AG04449 (cell line): ENCODE measurements at regions of chr5 and their contacts with region 1.

Region 1: GRCh38 chr5:148443998-148444397 is 60.2 kb downstream of the FBXO38 start:
- DNase-seq: peak; percentile 14
- H3K4me3 ChIP-seq: no peak overlapping the region
- CTCF ChIP-seq: peak; percentile 63

Region 2: GRCh38 chr5:148393390-148393741 is 50.6 kb before region 1 on chr5:
- CTCF ChIA-PET with region 1: interaction called, 20 read pairs
- POLR2A ChIA-PET with region 1: no interaction called
- DNase-seq: no peak
- H3K4me3 ChIP-seq: no peak overlapping the region
- CTCF ChIP-seq: no peak

Region 3: DNA sequence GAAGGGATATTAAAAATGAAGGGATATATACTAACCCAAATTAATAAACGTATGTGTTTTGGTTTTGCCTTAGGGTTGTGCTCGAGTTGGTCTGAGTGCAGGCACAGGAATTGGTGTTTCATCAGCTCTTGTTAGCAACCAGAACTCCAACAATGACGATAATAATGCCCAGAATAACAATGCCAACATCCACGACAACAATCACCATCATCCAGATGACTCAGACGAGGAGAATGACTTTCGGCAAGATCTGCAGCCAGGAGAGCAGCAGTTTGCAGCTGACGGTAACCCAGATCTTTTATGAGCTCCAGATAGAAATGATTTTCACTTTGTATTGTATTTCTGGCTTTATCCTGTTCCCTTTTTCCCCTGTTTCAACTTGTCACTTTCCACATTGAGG is 27.1 kb before region 1 on chr5:
- CTCF ChIA-PET with region 1: interaction called, 19 read pairs
- POLR2A ChIA-PET with region 1: no interaction called
- DNase-seq: no peak
- H3K4me3 ChIP-seq: no peak overlapping the region
- CTCF ChIP-seq: no peak

Region 4: DNA sequence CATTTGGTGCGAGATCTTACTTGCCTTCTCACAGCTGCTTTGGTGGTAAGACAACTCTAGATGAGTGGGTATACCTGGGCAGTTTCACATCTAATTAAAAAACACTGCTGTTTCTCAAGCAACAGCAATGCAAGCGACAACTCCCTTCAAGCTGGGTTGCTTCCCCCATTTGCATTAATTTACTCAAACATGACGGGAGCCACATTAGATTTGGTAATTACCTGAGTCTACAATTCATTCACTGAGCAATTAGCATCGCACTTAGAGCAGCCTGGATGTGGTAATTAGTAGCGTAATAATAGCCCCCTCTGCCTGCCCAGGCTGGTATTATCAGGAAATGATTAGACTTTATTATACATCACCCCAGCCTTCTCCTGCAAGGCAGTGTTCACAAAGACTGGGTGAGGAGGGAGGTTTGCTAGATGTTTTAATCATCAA is 13.2 kb after region 1 on chr5:
- CTCF ChIA-PET with region 1: interaction called, 52 read pairs
- POLR2A ChIA-PET with region 1: no interaction called
- DNase-seq: no peak
- H3K4me3 ChIP-seq: no peak overlapping the region
- CTCF ChIP-seq: no peak

Region 5: GRCh38 chr5:148595697-148596096 is 151.7 kb after region 1 on chr5:
- CTCF ChIA-PET with region 1: no interaction called
- POLR2A ChIA-PET with region 1: no interaction called
- DNase-seq: no peak
- H3K4me3 ChIP-seq: no peak overlapping the region
- CTCF ChIP-seq: no peak

Region 6: DNA sequence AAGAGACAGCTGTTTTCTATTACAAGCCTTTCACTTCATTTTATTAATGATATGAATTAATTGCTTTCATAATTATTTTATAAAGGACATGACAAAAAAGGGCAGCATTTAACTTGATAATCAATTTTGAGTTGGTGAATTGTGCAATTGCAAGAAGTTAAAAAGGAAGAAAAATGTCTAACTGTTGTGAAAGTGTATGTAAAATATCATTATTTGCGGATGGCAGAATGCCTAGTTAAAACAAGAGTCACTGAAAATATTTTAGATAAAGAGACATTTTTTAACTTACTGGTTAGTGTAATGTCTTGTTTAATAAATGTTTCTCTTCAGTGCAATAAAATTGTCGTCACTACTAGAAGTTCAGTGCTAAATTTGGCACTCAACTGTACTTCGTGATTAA is 268.0 kb after region 1 on chr5:
- CTCF ChIA-PET with region 1: no interaction called
- POLR2A ChIA-PET with region 1: no interaction called
- DNase-seq: no peak
- H3K4me3 ChIP-seq: no peak overlapping the region
- CTCF ChIP-seq: no peak

Region 7: GRCh38 chr5:148725677-148726076 is 281.7 kb after region 1 on chr5:
- CTCF ChIA-PET with region 1: interaction called, 342 read pairs
- POLR2A ChIA-PET with region 1: no interaction called
- DNase-seq: no peak
- H3K4me3 ChIP-seq: no peak overlapping the region
- CTCF ChIP-seq: no peak